ENCODE measurements at regions of chr17 and their contacts with region 1.

Region 1: DNA sequence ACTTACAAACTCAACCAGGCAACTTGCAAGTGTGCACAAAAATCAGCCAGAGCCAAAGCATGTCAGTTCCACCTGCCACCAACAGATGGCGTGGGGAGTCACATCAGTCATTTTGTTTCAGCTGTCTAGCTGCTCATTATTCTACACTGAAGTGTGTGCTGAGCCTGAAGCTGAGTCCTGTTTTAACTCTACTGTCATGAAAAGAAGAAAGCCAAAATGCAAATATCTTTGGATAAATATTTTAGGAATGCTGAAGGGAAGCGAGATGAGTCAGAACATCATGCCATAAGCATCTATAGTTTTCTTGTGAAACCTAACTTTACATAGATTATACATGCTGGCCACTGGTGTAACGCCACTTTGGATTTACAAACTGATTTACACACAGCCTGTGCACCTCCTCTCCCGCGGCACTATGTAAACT is 172.6 kb downstream of the CDK5R1 start:
- DNase-seq: peak; percentile 45
- H3K4me3 Mint-ChIP-seq: no peak overlapping the region
- H3K27ac Mint-ChIP-seq: no peak overlapping the region
- H3K4me1 Mint-ChIP-seq: peaks cover 3% of the 10 kb centered on the region
- H3K27me3 Mint-ChIP-seq: peaks cover 2% of the 10 kb centered on the region

Region 2: DNA sequence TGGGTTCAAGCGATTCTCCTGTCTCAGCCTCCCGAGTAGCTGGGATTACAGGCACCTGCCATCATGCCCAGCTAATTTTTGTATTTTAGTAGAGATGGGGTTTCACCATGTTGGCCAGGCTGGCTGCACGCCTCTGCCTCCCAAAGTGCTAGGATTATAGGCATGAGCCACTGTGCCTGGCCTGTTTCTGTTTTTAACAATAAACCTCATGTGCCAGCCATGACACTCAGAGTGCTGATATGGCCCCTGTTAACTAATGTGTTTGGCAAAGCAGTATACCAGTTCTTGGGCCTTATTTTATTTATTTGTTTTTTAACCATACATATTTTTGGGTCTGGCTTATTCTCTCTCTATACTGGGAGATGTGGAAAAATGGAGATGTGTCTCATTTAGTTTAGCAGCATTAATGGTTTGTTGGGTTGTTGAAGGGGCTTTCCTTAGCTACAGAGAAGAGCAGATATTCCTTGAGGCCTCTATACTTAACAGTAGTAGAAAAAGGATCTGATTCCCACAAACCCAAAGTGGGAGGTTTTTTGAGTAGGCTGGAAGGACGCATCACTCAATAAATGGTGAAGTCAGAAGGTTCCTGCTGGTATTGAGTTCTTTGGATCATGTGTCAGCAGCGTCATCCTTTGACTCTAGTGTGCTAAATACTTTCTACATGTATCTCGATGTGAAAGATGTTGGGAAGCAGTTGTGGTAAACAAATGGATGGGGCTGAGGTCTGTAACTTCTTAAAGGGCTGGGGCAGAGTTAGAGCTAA is 188.8 kb before region 1 on chr17:
- intact Hi-C with region 1: no loop called
- DNase-seq: no peak
- H3K4me3 Mint-ChIP-seq: no peak overlapping the region
- H3K27ac Mint-ChIP-seq: no peak overlapping the region
- H3K4me1 Mint-ChIP-seq: peaks cover 2% of the 10 kb centered on the region
- H3K27me3 Mint-ChIP-seq: no peaks in the 10 kb centered on the region

Region 3: DNA sequence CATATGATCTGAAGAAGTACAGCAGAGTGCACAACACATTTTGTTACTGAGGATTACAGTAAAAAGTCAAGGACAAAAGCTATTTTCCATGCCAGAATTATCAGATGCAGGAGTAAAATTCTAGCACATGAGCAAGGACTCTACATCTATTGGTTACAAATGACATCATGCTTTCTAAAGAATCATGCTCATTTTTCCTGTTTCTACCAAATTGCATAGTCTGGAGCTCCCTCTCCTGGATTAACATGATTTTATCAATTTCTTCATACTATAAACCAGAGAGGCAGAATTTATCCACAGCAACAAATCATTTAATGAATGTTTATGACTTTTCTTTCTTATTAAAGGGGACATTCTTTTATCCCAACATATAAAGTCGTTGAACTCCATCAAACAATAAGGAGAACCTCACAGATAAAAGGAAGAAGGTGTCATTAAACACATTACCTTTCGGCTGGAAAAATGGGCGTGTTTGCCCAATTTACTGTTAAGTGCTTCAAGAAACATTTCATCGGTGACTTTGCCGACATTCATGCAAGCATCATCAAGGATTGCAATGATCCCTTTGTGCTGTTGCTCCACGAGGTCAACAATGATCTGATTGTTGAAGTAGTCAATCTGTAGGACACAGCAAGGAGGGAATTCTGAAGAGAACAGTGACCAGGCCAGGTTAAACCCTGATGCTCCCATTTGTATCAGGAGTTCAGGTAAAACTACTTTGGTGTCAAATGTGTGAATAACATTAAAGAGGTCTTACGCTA is 95.8 kb after region 1 on chr17:
- intact Hi-C with region 1: loop called (anchors 1 kb)
- DNase-seq: no peak
- H3K4me3 Mint-ChIP-seq: no peak overlapping the region
- H3K27ac Mint-ChIP-seq: no peak overlapping the region
- H3K4me1 Mint-ChIP-seq: peaks cover 23% of the 10 kb centered on the region
- H3K27me3 Mint-ChIP-seq: no peaks in the 10 kb centered on the region